ENCODE measurements at regions of chr6 and their contacts with region 1.

Region 1: GRCh38 chr6:158026054-158026900 is 44.6 kb downstream of the SYNJ2 start:
- DNase-seq: peak; percentile 67 to 94 (median 82)
- ATAC-seq: peak; percentile 76 to 79
- H3K4me3 Mint-ChIP-seq: peak overlapping the region; percentile 73 to 91 (median 86)
- H3K27ac Mint-ChIP-seq: peak overlapping the region; percentile 90 to 99 (median 98)
- H3K4me1 Mint-ChIP-seq: peaks cover 28 to 42% (median 40%) of the 10 kb centered on the region in 4 donors
- H3K27me3 Mint-ChIP-seq: no peaks in the 10 kb centered on the region

Region 2: GRCh38 chr6:157981395-157982296 is 44.6 kb before region 1 on chr6 and contains the start of gene SYNJ2:
- POLR2A ChIA-PET with region 1: interaction called, 11 read pairs
- DNase-seq: peak; percentile 68 to 91 (median 82)
- ATAC-seq: peak; percentile 83 to 89
- H3K4me3 Mint-ChIP-seq: peak within 1 kb of the TSS; percentile 74 to 91 (median 83)
- H3K27ac Mint-ChIP-seq: peak within 1 kb of the TSS; percentile 74 to 93 (median 86)
- H3K4me1 Mint-ChIP-seq: peaks cover 21 to 58% (median 51%) of the 10 kb centered on the region in 4 donors
- H3K27me3 Mint-ChIP-seq: peaks cover 0 to 2% (median 0%) of the 10 kb centered on the region in 5 donors
- polyA plus RNA-seq, gene SYNJ2: 5.2 to 8.5 (median 8.2) TPM

Region 3: GRCh38 chr6:159595173-159595572 is 1568.9 kb after region 1 on chr6:
- POLR2A ChIA-PET with region 1: no interaction called
- DNase-seq: no peak
- ATAC-seq: no peak
- H3K4me3 Mint-ChIP-seq: no peak overlapping the region
- H3K27ac Mint-ChIP-seq: no peak overlapping the region
- H3K4me1 Mint-ChIP-seq: no peaks in the 10 kb centered on the region
- H3K27me3 Mint-ChIP-seq: peaks cover 0 to 6% (median 0%) of the 10 kb centered on the region in 5 donors